MCF 10A (cell line): ENCODE measurements at regions of chrX and their contacts with region 1.

Region 1: GRCh38 chrX:26873736-26874135 is 589.4 kb downstream of the PPP4R3C start:
- DNase-seq: no peak
- H3K4me3 Mint-ChIP-seq: no peak overlapping the region
- H3K27ac Mint-ChIP-seq: no peak overlapping the region
- H3K4me1 Mint-ChIP-seq: no peaks in the 10 kb centered on the region
- H3K27me3 Mint-ChIP-seq: no peaks in the 10 kb centered on the region
- CTCF ChIP-seq: no peak

Region 2: GRCh38 chrX:27491397-27491796 is 617.7 kb after region 1 on chrX:
- CTCF ChIA-PET with region 1: no interaction called
- POLR2A ChIA-PET with region 1: no interaction called
- intact Hi-C with region 1: loop called (anchors 10 kb)
- DNase-seq: no peak
- H3K4me3 Mint-ChIP-seq: no peak overlapping the region
- H3K27ac Mint-ChIP-seq: no peak overlapping the region
- H3K4me1 Mint-ChIP-seq: no peaks in the 10 kb centered on the region
- H3K27me3 Mint-ChIP-seq: no peaks in the 10 kb centered on the region
- CTCF ChIP-seq: no peak